ENCODE measurements at regions of chr14 and their contacts with region 1.

Region 1: GRCh38 chr14:100383727-100384158 is 60.6 kb downstream of the SLC25A47 start:
- DNase-seq: peak; percentile 87
- H3K4me3 ChIP-seq: peak overlapping the region in 1 of 2 experiments; percentile 15; a peak in 1 of 4 replicates
- H3K27ac ChIP-seq: peak overlapping the region in 1 of 2 experiments; percentile 90; a peak in 2 of 4 replicates
- H3K4me1 ChIP-seq: peaks cover 10 to 46% of the 10 kb centered on the region in 2 experiments
- H3K27me3 ChIP-seq: no peaks in the 10 kb centered on the region
- CTCF ChIP-seq: peak; percentile 83
- EP300 ChIP-seq: no peak
- RAD21 ChIP-seq: peak; percentile 88

Region 2: GRCh38 chr14:100306420-100307219 is 77.1 kb before region 1 on chr14 and contains the start of gene SLC25A29:
- CTCF ChIA-PET with region 1: interaction called, 12 read pairs
- POLR2A ChIA-PET with region 1: no interaction called
- DNase-seq: peak; percentile 99
- H3K4me3 ChIP-seq: peak within 1 kb of the TSS; percentile 87 to 90
- H3K27ac ChIP-seq: peak within 1 kb of the TSS; percentile 51 to 81
- H3K4me1 ChIP-seq: peaks cover 0 to 28% of the 10 kb centered on the region in 2 experiments; a peak in 2 of 4 replicates
- H3K27me3 ChIP-seq: no peaks in the 10 kb centered on the region
- CTCF ChIP-seq: no peak
- EP300 ChIP-seq: no peak; a peak in 1 of 4 replicates
- RAD21 ChIP-seq: no peak
- polyA plus RNA-seq, gene SLC25A29: 66.9 and 84.6 TPM in 2 replicates

Region 3: DNA sequence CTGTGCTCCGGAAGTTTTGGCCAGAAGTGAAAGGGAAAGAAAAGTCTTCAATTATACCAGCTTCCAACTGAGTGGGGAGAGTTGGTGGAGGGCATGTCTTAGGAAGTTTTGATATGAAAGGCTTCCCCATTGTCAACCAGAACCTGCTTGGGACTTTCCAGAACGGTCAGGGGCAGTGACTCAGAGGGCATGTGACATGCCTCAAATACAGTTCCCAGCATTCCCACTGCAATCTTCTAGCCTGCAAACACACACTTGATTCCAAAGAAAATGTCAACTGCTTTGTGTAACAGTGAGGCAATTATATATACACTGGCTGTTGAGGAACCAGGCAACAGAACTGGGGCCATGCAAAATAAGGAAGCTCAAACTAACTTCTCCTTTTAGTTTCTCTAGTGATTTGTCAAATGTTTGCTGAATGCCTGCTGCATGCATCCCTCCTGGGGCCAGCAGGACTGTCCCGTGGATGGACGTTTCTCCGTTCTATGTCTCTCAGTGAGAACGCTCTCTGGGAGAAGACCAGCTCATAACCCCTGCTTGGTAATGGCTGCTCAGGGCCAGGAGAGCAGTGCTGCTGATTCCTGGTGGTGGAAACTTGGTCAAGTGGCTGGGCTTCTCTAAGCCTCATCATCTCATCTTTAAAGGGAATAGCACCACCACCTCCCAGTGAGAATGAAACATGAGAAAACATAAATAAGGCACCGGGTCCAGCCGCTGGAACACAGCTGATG is 42.3 kb before region 1 on chr14:
- CTCF ChIA-PET with region 1: no interaction called
- POLR2A ChIA-PET with region 1: no interaction called
- DNase-seq: peak; percentile 14
- H3K4me3 ChIP-seq: no peak overlapping the region
- H3K27ac ChIP-seq: peak overlapping the region in 1 of 2 experiments; percentile 75; a peak in 2 of 4 replicates
- H3K4me1 ChIP-seq: peaks cover 0 to 5% of the 10 kb centered on the region in 2 experiments; a peak in 2 of 4 replicates
- H3K27me3 ChIP-seq: no peaks in the 10 kb centered on the region
- CTCF ChIP-seq: no peak
- EP300 ChIP-seq: no peak
- RAD21 ChIP-seq: no peak

Region 4: GRCh38 chr14:100440187-100440631 is 56.5 kb after region 1 on chr14:
- CTCF ChIA-PET with region 1: interaction called, 236 read pairs
- POLR2A ChIA-PET with region 1: interaction called, 37 read pairs
- DNase-seq: peak; percentile 66
- H3K4me3 ChIP-seq: peak overlapping the region; percentile 0 to 12; a peak in 2 of 4 replicates
- H3K27ac ChIP-seq: peak overlapping the region; percentile 68 to 100
- H3K4me1 ChIP-seq: peaks cover 34 to 95% of the 10 kb centered on the region in 2 experiments
- H3K27me3 ChIP-seq: no peaks in the 10 kb centered on the region
- CTCF ChIP-seq: peak; percentile 72
- EP300 ChIP-seq: no peak
- RAD21 ChIP-seq: peak; percentile 89

Region 5: GRCh38 chr14:100638211-100638855 is 254.6 kb after region 1 on chr14:
- CTCF ChIA-PET with region 1: interaction called, 10 read pairs
- POLR2A ChIA-PET with region 1: no interaction called
- DNase-seq: no peak
- H3K4me3 ChIP-seq: no peak overlapping the region
- H3K27ac ChIP-seq: no peak overlapping the region; a peak in 1 of 4 replicates
- H3K4me1 ChIP-seq: peaks cover 0 to 45% of the 10 kb centered on the region in 2 experiments; a peak in 1 of 4 replicates
- H3K27me3 ChIP-seq: peaks cover 11% of the 10 kb centered on the region
- CTCF ChIP-seq: no peak
- EP300 ChIP-seq: no peak
- RAD21 ChIP-seq: no peak

Region 6: GRCh38 chr14:100677554-100678468 is 294.1 kb after region 1 on chr14:
- CTCF ChIA-PET with region 1: interaction called, 24 read pairs
- POLR2A ChIA-PET with region 1: interaction called, 9 read pairs
- DNase-seq: peak; percentile 89
- H3K4me3 ChIP-seq: no peak overlapping the region
- H3K27ac ChIP-seq: peak overlapping the region in 1 of 2 experiments; percentile 99; a peak in 3 of 4 replicates
- H3K4me1 ChIP-seq: peaks cover 0 to 97% of the 10 kb centered on the region in 2 experiments; a peak in 2 of 4 replicates
- H3K27me3 ChIP-seq: no peaks in the 10 kb centered on the region
- CTCF ChIP-seq: no peak
- EP300 ChIP-seq: peak in 1 of 2 experiments; percentile 77; a peak in 2 of 4 replicates
- RAD21 ChIP-seq: peak; percentile 2; the same call in 1 of the 2 replicates

Region 7: GRCh38 chr14:100783630-100784370 is 400.1 kb after region 1 on chr14:
- CTCF ChIA-PET with region 1: interaction called, 21 read pairs
- POLR2A ChIA-PET with region 1: interaction called, 6 read pairs
- DNase-seq: peak; percentile 84
- H3K4me3 ChIP-seq: no peak overlapping the region
- H3K27ac ChIP-seq: peak overlapping the region in 1 of 2 experiments; percentile 100; a peak in 2 of 4 replicates
- H3K4me1 ChIP-seq: peaks cover 0 to 87% of the 10 kb centered on the region in 2 experiments; a peak in 1 of 4 replicates
- H3K27me3 ChIP-seq: no peaks in the 10 kb centered on the region
- CTCF ChIP-seq: no peak
- EP300 ChIP-seq: peak in 1 of 2 experiments; percentile 98; a peak in 2 of 4 replicates
- RAD21 ChIP-seq: peak; percentile 23

Region 8: DNA sequence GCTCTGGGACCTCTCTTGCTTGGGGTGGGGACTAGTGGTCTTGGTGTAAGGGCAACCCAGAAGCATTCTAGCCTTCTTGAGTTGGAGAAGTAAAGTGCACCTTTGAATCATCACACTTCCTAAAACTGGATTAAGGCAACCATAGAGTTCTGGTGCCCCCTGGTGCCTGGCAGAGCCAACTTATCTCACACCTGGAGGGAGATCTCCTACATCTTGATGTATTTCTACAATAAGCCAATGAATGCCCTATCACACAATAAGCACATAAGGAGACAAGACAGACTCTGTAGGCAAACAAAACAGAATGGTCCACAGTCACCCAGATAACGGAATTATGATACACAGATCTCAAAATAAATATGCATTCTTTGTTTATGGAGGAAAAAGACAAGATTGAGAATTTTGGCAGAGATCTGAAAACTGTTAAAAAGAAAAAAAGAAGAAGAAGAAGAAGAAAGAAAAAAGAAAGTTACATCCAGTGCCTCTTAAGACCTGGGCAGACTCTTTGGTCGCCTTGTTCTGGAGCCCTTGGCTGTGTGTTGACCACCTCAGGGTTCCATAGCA is 1281.9 kb after region 1 on chr14:
- CTCF ChIA-PET with region 1: interaction called, 14 read pairs
- POLR2A ChIA-PET with region 1: no interaction called
- DNase-seq: peak; percentile 63
- H3K4me3 ChIP-seq: no peak overlapping the region
- H3K27ac ChIP-seq: no peak overlapping the region
- H3K4me1 ChIP-seq: peaks cover 0 to 5% of the 10 kb centered on the region in 2 experiments; a peak in 1 of 4 replicates
- H3K27me3 ChIP-seq: no peaks in the 10 kb centered on the region
- CTCF ChIP-seq: peak; percentile 50
- EP300 ChIP-seq: no peak
- RAD21 ChIP-seq: peak; percentile 92